Transverse colon (tissue), 4 donors: ENCODE measurements at regions of chr5 and their contacts with region 1.

Region 1: DNA sequence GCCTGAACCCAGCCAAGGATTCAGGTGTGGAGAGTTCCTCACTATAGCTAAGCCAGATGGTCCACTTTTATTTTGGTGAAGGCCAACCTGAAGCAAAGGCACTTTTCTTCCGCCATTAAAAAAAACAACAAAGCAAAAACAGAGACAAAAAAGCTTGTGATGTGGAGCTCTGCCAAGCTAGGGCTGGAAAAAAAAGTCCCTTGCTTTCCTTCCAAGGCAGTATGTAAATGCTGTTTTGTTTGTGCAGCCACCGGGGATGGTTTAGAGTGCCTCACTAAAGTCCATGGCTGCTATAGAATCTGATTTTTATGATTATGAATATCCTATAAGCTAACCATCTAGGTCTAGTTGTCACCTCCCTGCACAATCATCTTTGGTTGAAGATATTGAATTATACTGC is 14.9 kb downstream of the MEGF10 start:
- DNase-seq: no peak
- H3K4me3 ChIP-seq: no peak overlapping the region
- H3K27ac ChIP-seq: no peak overlapping the region
- H3K4me1 ChIP-seq: peaks cover 0 to 5% (median 0%) of the 10 kb centered on the region in 4 donors
- H3K27me3 ChIP-seq: no peaks in the 10 kb centered on the region
- CTCF ChIP-seq: no peak
- EP300 ChIP-seq: no peak
- POLR2A ChIP-seq: no peak

Region 2: GRCh38 chr5:127176769-127177168 is 128.7 kb before region 1 on chr5:
- in situ Hi-C with region 1: no loop called
- intact Hi-C with region 1: no loop called
- DNase-seq: no peak
- H3K4me3 ChIP-seq: no peak overlapping the region
- H3K27ac ChIP-seq: no peak overlapping the region
- H3K4me1 ChIP-seq: no peaks in the 10 kb centered on the region
- H3K27me3 ChIP-seq: no peaks in the 10 kb centered on the region
- CTCF ChIP-seq: no peak
- EP300 ChIP-seq: no peak
- POLR2A ChIP-seq: no peak

Region 3: DNA sequence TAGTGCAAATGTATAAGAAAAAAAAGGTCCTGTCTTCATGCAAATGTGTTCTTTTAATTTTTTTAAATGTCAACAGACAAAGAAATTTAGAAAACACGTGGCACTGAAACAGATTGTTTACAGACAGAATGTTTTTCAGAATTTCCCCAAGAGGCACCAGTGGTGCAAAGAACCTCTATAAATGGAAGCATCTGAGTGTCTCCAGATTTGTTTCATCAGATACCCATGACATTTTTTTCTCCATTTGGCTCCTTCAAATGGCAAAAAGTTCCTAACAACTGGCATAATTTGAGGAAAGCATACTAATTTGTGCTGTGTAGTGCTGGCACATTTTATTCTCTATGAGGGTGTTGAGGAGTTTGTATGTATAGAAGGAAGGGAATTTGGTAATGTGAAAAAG is 412.7 kb after region 1 on chr5:
- in situ Hi-C with region 1: no loop called
- intact Hi-C with region 1: loop called (anchors 5 kb)
- DNase-seq: no peak
- H3K4me3 ChIP-seq: no peak overlapping the region
- H3K27ac ChIP-seq: no peak overlapping the region
- H3K4me1 ChIP-seq: peaks cover 0 to 3% (median 0%) of the 10 kb centered on the region in 4 donors
- H3K27me3 ChIP-seq: no peaks in the 10 kb centered on the region
- CTCF ChIP-seq: no peak
- EP300 ChIP-seq: no peak
- POLR2A ChIP-seq: no peak